ENCODE measurements at regions of chr17 and their contacts with region 1.

Region 1: GRCh38 chr17:17818088-17818526 is 18.7 kb downstream of the SREBF1 start:
- DNase-seq: peak; percentile 56
- H3K4me3 ChIP-seq: no peak overlapping the region
- H3K27ac ChIP-seq: no peak overlapping the region
- H3K4me1 ChIP-seq: peaks cover 36% of the 10 kb centered on the region
- CTCF ChIP-seq: no peak

Region 2: GRCh38 chr17:17783116-17783824 is 34.8 kb before region 1 on chr17:
- CTCF ChIA-PET with region 1: no interaction called
- POLR2A ChIA-PET with region 1: no interaction called
- intact Hi-C with region 1: no loop called
- DNase-seq: peak; percentile 93
- H3K4me3 ChIP-seq: peak overlapping the region; percentile 68
- H3K27ac ChIP-seq: peak overlapping the region; percentile 99
- H3K4me1 ChIP-seq: peaks cover 54% of the 10 kb centered on the region
- CTCF ChIP-seq: peak; percentile 66

Region 3: GRCh38 chr17:17805575-17805974 is 12.5 kb before region 1 on chr17:
- CTCF ChIA-PET with region 1: no interaction called
- POLR2A ChIA-PET with region 1: no interaction called
- intact Hi-C with region 1: no loop called
- DNase-seq: no peak
- H3K4me3 ChIP-seq: no peak overlapping the region
- H3K27ac ChIP-seq: no peak overlapping the region
- H3K4me1 ChIP-seq: peaks cover 13% of the 10 kb centered on the region
- CTCF ChIP-seq: no peak

Region 4: DNA sequence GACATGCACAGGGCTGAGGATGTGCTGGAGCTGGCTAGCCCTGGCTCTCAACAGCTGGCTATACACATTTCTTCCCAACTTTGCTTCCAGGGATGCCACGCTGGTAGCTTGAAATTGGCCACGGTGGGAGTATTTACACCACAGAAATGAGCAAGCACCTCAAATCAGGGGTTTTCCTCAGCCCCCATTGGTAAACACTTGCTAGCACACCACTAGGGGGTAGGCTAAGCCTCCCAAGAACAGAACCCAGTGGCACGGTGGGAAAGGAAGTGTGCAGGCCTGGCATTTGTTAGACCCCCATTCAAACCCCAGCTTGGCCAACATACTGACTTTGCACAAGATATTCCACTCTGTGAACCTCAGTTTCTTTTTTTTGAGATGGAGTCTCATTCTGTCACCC is 167.4 kb after region 1 on chr17:
- CTCF ChIA-PET with region 1: interaction called, 13 read pairs
- POLR2A ChIA-PET with region 1: no interaction called
- intact Hi-C with region 1: no loop called
- DNase-seq: peak; percentile 50
- H3K4me3 ChIP-seq: no peak overlapping the region
- H3K27ac ChIP-seq: no peak overlapping the region
- H3K4me1 ChIP-seq: no peaks in the 10 kb centered on the region
- CTCF ChIP-seq: peak; percentile 72

Measured in OCI-LY7 (cell line).